Activated T-helper 2 cell treated with anti-CD3 and anti-CD28 coated beads, Interferon-gamma antibody, Interleukin-2, Interleukin-4, amounts not matched to agents 10 μg/mL and 5 μg/mL and 100 μg/mL, durations not matched to agents 14 hours and 24 hours and 36 hours (primary cell): ENCODE measurements at regions of chr5 and their contacts with region 1.

Region 1: DNA sequence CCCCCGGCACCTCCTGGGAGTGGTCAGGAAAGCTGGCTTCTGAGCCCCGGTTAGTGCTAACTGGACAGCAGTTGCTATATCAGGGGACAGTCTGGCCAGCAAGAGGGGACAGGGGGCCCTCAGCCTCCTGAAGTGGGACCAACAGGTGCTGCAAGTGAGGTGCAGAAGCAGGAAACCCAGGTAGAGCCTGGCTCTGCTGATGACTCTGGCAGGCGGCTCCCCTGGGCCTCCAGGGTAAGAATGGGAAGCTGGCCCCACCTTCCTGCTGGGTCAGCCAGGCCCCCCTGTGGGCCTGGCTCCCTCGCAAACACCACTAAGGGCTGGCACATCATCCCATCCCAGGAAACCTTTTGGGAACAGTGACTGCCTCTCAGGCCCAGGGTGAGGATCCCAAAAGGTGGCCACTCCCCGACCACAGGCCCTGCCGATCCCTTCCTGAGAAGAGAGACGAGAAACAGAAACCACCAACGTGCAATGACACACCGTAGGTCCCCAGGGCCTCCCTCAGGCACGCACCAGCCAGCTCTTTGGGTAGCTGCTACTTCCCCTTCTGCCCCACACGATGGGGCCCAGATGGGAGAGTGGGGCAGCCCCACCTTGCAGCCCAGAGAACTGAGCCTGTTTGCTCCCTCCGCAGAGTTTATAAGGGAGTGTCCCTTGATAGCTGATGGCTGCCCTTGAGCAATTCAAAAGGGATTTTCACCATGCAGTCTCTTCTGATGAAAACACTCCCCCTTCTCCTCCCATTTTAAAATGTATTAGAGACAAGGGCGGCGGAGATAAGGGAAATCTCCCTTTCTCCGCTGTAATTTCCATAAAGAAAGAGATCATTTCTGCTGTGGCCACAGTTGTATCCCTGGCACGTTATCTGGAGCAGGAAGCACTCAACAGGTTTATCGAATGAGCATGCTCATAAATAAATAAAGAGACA is 76.8 kb downstream of the STK10 start:
- DNase-seq: peak; percentile 76
- H3K4me3 Mint-ChIP-seq: peak overlapping the region; percentile 60
- H3K27ac Mint-ChIP-seq: peak overlapping the region; percentile 91
- H3K4me1 Mint-ChIP-seq: peaks cover 76% of the 10 kb centered on the region
- H3K27me3 Mint-ChIP-seq: no peaks in the 10 kb centered on the region

Region 2: DNA sequence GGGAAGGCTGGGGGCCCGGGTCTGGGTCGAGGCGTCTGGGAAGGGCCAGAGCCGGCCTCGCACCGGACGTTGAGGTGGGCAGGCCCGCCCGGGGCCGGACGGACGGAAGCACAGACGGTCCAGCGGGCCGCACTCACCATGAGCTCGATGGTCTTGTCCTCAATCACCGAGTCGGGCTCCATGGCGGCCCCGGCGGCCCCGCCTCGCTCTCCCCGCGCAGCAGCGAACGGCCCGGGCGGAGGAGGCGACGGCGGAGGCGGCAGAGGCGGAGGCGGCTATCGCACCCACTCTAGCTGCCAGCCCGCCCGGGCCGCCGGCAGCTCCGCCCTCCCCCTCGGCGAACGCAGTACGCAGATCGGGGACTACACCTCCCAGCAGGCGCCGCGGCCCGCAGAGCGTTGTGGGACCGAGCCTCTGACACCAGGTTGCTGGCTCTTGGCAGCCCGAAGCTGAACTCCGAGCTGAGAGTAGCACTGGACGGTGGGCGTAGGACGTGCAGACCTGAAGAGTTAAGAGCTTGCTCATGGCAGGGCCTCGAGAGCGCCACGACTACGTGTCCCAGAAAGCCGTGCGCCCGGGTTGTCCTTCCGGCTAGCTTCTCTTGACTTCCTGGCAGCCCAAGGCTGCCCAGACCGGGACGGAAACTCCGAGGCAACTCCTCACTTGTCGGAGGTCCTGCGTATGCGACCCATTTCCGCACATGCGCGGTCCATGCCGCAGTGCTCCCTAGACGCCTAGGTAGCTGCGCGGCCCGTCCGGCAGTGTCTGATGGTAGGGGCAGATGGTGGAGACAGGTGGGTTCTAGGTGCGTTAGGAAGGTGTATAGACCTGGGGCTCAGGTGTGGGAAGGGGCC is 104.6 kb before region 1 on chr5 and contains the start of gene FBXW11:
- intact Hi-C with region 1: loop called (anchors 1 kb)
- DNase-seq: peak; percentile 92
- H3K4me3 Mint-ChIP-seq: peak within 1 kb of the TSS; percentile 94
- H3K27ac Mint-ChIP-seq: peak within 1 kb of the TSS; percentile 96
- H3K4me1 Mint-ChIP-seq: peaks cover 56% of the 10 kb centered on the region
- H3K27me3 Mint-ChIP-seq: no peaks in the 10 kb centered on the region
- total RNA-seq, gene FBXW11: 47.3 and 51.4 TPM in 2 replicates

Region 3: GRCh38 chr5:172044631-172045314 is 66.4 kb before region 1 on chr5:
- intact Hi-C with region 1: no loop called
- DNase-seq: no peak
- H3K4me3 Mint-ChIP-seq: no peak overlapping the region
- H3K27ac Mint-ChIP-seq: peak overlapping the region; percentile 64
- H3K4me1 Mint-ChIP-seq: no peaks in the 10 kb centered on the region
- H3K27me3 Mint-ChIP-seq: no peaks in the 10 kb centered on the region

Region 4: DNA sequence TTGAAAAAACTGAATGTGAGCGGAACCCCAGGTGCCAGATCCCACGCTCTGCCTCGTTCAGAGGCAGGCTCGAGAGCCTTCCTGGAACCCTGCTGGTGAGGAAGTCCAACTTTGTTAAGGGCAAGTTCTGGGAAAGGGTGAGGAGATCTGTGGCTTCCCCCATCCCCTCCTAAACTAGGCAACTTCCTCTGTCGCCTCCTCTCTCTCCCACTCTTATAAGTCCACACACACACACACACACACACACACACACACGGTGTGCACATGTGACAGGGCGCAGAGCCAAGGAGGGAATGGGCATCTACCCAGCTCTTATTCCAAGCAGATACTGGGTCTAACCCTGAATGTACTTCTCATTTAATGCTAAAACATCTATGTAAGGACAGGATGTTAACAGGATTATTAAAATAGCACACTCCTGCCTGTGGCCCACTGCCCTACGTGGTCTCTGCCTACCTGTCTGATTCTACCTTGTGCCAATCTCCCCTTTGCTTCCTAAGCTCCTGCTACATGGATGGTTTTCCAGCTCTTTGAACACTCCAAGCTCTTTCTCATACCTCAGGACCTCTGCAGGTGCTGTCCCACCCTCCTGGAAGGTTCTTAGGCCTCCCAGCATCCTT is 32.4 kb before region 1 on chr5:
- intact Hi-C with region 1: no loop called
- DNase-seq: no peak
- H3K4me3 Mint-ChIP-seq: no peak overlapping the region
- H3K27ac Mint-ChIP-seq: peak overlapping the region; percentile 73
- H3K4me1 Mint-ChIP-seq: peaks cover 13% of the 10 kb centered on the region
- H3K27me3 Mint-ChIP-seq: no peaks in the 10 kb centered on the region

Region 5: GRCh38 chr5:172133359-172134029 is 22.3 kb after region 1 on chr5:
- intact Hi-C with region 1: loop called (anchors 2 kb)
- DNase-seq: no peak
- H3K4me3 Mint-ChIP-seq: peak overlapping the region; percentile 58
- H3K27ac Mint-ChIP-seq: peak overlapping the region; percentile 96
- H3K4me1 Mint-ChIP-seq: peaks cover 34% of the 10 kb centered on the region
- H3K27me3 Mint-ChIP-seq: no peaks in the 10 kb centered on the region

Region 6: GRCh38 chr5:172179361-172179989 is 68.3 kb after region 1 on chr5:
- intact Hi-C with region 1: loop called (anchors 1 kb)
- DNase-seq: peak; percentile 44
- H3K4me3 Mint-ChIP-seq: peak overlapping the region; percentile 76
- H3K27ac Mint-ChIP-seq: peak overlapping the region; percentile 92
- H3K4me1 Mint-ChIP-seq: peaks cover 73% of the 10 kb centered on the region
- H3K27me3 Mint-ChIP-seq: no peaks in the 10 kb centered on the region

Region 7: DNA sequence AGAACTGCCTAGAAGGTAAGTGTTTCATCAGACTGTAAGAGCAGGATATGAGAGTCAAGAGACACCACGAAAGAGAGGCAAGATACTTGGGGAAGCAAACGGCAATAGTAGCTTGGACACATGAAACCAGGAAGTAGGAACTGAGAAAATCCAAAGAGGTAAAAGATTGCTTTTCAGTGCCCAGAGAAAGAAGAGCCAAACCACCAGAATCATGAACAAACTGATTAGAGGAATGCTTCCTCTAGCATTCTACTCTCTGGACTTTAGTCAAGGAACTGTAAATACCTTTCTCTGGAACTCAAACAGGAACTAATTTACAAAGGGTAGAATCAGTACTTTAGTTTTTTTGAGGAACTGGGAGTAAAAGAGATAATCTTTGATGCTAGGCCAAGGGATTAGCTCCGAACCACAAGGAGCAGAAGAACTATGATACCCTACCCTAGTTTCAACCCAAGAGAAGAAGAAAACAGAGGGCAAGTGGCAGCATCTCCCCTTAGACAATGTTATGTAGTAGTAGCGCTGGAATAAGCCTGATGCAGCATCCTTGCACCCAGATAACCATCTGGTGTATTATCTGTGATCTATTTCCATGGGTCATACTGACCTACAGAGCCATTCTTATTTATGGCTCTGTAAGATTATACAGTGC is 124.1 kb after region 1 on chr5:
- intact Hi-C with region 1: loop called (anchors 5 kb)
- DNase-seq: no peak
- H3K4me3 Mint-ChIP-seq: no peak overlapping the region
- H3K27ac Mint-ChIP-seq: no peak overlapping the region
- H3K4me1 Mint-ChIP-seq: peaks cover 43% of the 10 kb centered on the region
- H3K27me3 Mint-ChIP-seq: peaks cover 6% of the 10 kb centered on the region

Region 8: DNA sequence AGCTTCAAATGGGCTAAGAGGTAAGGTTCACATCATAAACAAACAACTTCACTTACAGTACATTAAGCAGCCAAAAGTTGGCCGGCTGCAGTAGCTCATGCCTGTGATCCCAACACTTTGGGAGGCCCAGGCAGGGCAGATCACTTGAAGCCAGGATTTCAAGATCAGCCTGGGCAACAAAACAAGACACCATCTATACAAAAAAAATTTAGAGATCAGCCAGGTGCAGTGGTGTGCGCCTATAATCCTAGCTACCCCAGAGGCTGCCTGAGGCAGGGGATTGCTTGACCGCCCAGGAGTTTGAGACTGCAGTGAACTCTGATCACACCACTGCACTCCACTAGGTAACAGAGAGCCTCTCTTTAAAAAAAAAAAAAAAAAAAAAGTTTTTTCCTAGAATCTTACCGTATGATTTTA is 155.5 kb after region 1 on chr5:
- intact Hi-C with region 1: no loop called
- DNase-seq: no peak
- H3K4me3 Mint-ChIP-seq: no peak overlapping the region
- H3K27ac Mint-ChIP-seq: no peak overlapping the region
- H3K4me1 Mint-ChIP-seq: peaks cover 4% of the 10 kb centered on the region
- H3K27me3 Mint-ChIP-seq: no peaks in the 10 kb centered on the region

Region 9: GRCh38 chr5:172283020-172283861 is 172.1 kb after region 1 on chr5 and contains the start of gene UBTD2:
- intact Hi-C with region 1: loop called (anchors 2 kb)
- DNase-seq: peak; percentile 79
- H3K4me3 Mint-ChIP-seq: peak within 1 kb of the TSS; percentile 89
- H3K27ac Mint-ChIP-seq: peak within 1 kb of the TSS; percentile 75
- H3K4me1 Mint-ChIP-seq: peaks cover 24% of the 10 kb centered on the region
- H3K27me3 Mint-ChIP-seq: peaks cover 25% of the 10 kb centered on the region
- total RNA-seq, gene UBTD2: 6.6 TPM in 2 replicates